Common myeloid progenitor, CD34-positive (primary cell): ENCODE measurements at regions of chr20 and their contacts with region 1.

Region 1: DNA sequence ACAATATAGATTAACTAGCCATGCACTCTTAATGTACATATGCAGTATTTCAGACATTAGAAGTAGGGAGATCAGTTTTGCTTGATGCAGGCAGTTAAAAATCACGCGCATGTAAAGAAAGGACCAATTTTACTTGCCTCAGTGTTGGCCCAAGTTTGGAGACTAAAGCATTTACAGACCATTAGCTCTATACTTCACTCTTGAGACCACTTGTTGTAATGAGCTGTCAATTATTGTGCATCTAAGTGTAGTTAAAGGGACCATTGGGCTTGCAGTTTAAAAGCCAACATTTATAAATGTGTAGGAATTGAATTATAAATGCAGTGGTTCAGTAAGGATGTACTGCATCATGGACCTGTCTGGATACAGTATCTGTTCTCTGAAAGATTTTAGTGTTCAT is 53.7 kb downstream of the PLCB4 start:
- DNase-seq: no peak
- H3K4me3 ChIP-seq: no peak overlapping the region
- H3K27ac ChIP-seq: no peak overlapping the region
- H3K4me1 ChIP-seq: peaks cover 3 to 32% (median 11%) of the 10 kb centered on the region in 4 experiments
- H3K27me3 ChIP-seq: no peaks in the 10 kb centered on the region

Region 2: GRCh38 chr20:8803065-8803464 is 319.5 kb before region 1 on chr20:
- CTCF ChIA-PET with region 1: no interaction called
- POLR2A ChIA-PET with region 1: no interaction called
- DNase-seq: no peak
- H3K4me3 ChIP-seq: no peak overlapping the region
- H3K27ac ChIP-seq: no peak overlapping the region
- H3K4me1 ChIP-seq: peaks cover 0 to 15% (median 9%) of the 10 kb centered on the region in 4 experiments
- H3K27me3 ChIP-seq: no peaks in the 10 kb centered on the region

Region 3: DNA sequence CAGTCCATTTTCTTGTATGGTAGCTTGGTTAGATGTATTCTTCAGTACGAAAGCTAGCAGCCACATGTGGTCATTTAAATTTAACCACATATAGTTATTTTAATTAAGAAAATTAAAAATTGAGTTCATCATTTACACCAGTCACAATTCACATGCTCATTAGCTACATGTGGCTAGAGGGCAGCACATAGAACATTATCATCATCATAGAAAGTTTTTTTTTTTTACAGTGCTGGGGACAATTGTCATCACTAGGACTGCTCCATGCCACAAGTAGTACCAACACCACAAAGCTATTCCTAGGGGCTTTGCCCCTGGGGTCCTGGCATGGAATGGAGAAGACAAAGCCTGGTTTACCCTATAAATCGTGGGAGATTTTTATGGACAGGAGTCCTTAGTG is 23.2 kb before region 1 on chr20:
- CTCF ChIA-PET with region 1: no interaction called
- POLR2A ChIA-PET with region 1: no interaction called
- DNase-seq: peak in 2 of 3 donors; percentile 27 to 28
- H3K4me3 ChIP-seq: no peak overlapping the region
- H3K27ac ChIP-seq: no peak overlapping the region
- H3K4me1 ChIP-seq: no peaks in the 10 kb centered on the region
- H3K27me3 ChIP-seq: no peaks in the 10 kb centered on the region

Region 4: GRCh38 chr20:9136114-9136513 is 13.5 kb after region 1 on chr20:
- CTCF ChIA-PET with region 1: interaction called, 10 read pairs
- POLR2A ChIA-PET with region 1: no interaction called
- DNase-seq: peak; percentile 71 to 85 (median 77)
- H3K4me3 ChIP-seq: peak overlapping the region in 1 of 7 experiments; percentile 52
- H3K27ac ChIP-seq: peak overlapping the region; percentile 5 to 69
- H3K4me1 ChIP-seq: peaks cover 5 to 23% (median 17%) of the 10 kb centered on the region in 4 experiments
- H3K27me3 ChIP-seq: no peaks in the 10 kb centered on the region